Activated B cell treated with CpG ODN at 0.5 μM for 24 hours (primary cell): ENCODE measurements at regions of chr10 and their contacts with region 1.

Region 1: DNA sequence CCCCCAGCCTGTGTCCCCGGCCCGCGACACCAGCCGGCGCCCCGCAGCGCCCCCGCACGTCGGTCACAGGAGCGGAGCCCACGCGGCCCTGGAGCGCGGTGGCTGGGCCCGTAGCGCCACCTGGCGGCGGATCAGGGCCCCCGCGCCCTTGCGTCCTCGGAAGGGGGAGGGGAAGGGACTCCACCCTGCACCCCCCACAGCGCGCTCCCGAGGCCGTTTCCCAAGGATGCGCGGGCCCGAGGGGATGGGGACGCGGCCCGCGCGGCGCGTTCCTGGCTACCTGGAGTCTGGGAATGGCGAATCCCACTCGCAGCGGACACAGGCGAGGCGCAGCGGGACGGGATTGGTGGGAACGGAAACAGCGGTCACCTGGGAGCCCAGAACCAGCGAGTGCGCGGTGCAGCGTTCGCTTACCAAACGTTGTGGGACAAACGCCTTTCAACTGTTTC is 23.8 kb upstream of the MKI67 start:
- DNase-seq: peak; percentile 72
- ATAC-seq: peak; percentile 80
- H3K4me3 Mint-ChIP-seq: peak overlapping the region; percentile 59
- H3K27ac Mint-ChIP-seq: no peak overlapping the region
- H3K4me1 Mint-ChIP-seq: peaks cover 30% of the 10 kb centered on the region
- H3K27me3 Mint-ChIP-seq: peaks cover 11% of the 10 kb centered on the region
- CTCF ChIP-seq: no peak

Region 2: DNA sequence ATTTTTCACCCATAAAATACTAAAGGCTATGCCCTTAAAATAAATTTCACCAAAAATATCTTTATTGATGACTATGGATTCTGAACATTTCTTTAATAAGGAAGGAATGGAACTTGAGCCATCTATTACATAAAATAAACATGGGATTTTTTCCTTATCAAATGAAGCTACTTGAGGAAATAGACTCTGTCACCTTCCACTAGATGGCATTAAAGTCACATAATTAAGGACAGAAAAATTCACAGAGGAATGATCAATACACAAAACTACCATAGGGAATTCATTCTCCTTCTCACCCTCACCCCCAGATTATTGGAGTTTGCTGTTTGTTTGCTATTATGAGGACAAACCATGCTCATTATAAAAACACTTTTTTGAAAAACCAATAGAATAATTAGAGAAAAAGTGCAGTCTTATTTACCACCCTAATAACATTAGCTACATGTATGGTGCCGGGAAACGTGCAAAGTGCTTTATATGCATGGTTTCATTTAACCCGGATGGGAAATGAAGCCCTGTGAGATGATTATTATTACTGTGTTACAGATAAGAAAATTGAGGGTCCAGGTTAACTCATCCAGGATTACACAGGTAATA is 434.2 kb before region 1 on chr10:
- CTCF ChIA-PET with region 1: interaction called, 6 read pairs
- POLR2A ChIA-PET with region 1: no interaction called
- intact Hi-C with region 1: loop called (anchors 1 kb)
- DNase-seq: no peak
- ATAC-seq: no peak
- H3K4me3 Mint-ChIP-seq: no peak overlapping the region
- H3K27ac Mint-ChIP-seq: no peak overlapping the region
- H3K4me1 Mint-ChIP-seq: no peaks in the 10 kb centered on the region
- H3K27me3 Mint-ChIP-seq: no peaks in the 10 kb centered on the region
- CTCF ChIP-seq: no peak

Region 3: GRCh38 chr10:127906548-127907377 is 243.3 kb before region 1 on chr10 and contains the start of gene PTPRE:
- CTCF ChIA-PET with region 1: interaction called, 3 read pairs
- POLR2A ChIA-PET with region 1: no interaction called
- intact Hi-C with region 1: loop called (anchors 1 kb)
- DNase-seq: peak; percentile 71
- ATAC-seq: peak; percentile 98
- H3K4me3 Mint-ChIP-seq: peak within 1 kb of the TSS; percentile 29
- H3K27ac Mint-ChIP-seq: no peak within 1 kb of the TSS
- H3K4me1 Mint-ChIP-seq: no peaks in the 10 kb centered on the region
- H3K27me3 Mint-ChIP-seq: peaks cover 47% of the 10 kb centered on the region
- CTCF ChIP-seq: no peak
- total RNA-seq, gene PTPRE: 28.2 and 36.8 TPM in 2 replicates

Region 4: DNA sequence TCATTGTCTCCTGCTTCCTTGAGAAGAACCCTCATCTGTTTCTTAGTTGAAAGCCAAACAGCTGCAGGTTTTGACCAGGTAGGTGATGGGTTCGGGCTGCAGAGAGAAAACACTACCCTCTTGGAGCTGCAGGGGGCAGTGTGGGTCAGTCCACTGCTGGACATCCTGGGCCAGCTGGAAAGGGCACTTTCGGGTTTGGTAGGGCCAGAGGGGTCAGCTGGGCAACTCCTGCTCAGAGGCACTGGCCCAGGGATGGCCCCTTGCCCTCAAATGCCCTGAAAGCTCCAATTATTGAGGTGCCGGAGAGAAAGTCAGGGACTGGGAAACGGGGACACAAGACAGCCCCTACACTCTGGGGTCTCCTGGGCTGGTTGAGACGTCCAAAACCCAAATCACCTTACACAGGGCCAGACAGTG is 114.5 kb before region 1 on chr10:
- CTCF ChIA-PET with region 1: interaction called, 22 read pairs
- POLR2A ChIA-PET with region 1: no interaction called
- intact Hi-C with region 1: loop called (anchors 2 kb)
- DNase-seq: peak; percentile 50
- ATAC-seq: peak; percentile 81
- H3K4me3 Mint-ChIP-seq: no peak overlapping the region
- H3K27ac Mint-ChIP-seq: no peak overlapping the region
- H3K4me1 Mint-ChIP-seq: no peaks in the 10 kb centered on the region
- H3K27me3 Mint-ChIP-seq: peaks cover 2% of the 10 kb centered on the region
- CTCF ChIP-seq: peak; percentile 18

Region 5: DNA sequence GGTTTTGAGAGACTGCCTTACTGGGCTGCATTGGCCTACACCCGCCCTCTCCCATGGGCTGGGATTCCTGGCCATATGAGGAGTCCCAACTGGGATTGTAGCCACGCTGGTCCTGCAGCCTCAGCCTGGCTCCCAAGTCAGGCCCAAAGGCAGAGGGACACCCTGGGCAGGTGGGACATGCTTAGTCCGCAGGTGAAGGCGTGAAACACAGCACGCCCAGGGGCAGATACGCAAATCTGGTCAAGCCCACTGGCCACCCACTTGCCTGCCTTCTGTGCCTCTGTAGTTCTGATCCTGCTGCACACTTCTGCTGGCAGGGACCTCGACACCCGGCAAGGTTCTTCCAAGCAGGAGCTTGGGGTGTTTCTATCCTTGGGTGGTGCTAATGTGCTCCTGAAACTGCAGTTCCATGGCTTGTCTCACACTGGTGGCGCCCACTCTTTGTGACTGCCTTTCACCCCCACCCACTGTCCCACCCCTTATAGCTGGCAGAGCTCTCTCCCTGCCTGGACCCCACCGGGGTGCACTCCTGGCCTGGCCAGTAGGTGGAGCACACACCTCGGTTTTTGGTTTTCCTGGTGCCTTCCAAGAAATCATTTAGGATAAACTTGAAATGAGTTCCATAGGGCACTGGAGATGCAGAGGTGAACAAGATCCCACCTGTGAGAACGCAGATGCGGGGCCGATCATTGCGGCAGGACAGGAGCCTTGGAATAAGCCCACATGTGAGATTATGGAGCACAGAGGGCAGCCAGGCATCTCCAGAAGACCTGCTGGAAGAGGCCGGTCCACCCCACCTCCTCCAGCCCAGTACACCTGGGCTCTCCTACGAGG is 71.7 kb before region 1 on chr10:
- CTCF ChIA-PET with region 1: interaction called, 46 read pairs
- POLR2A ChIA-PET with region 1: no interaction called
- intact Hi-C with region 1: loop called (anchors 1 kb)
- DNase-seq: peak; percentile 47
- ATAC-seq: peak; percentile 72
- H3K4me3 Mint-ChIP-seq: no peak overlapping the region
- H3K27ac Mint-ChIP-seq: no peak overlapping the region
- H3K4me1 Mint-ChIP-seq: no peaks in the 10 kb centered on the region
- H3K27me3 Mint-ChIP-seq: no peaks in the 10 kb centered on the region
- CTCF ChIP-seq: peak; percentile 53

Region 6: GRCh38 chr10:128125944-128126764 is 23.9 kb before region 1 on chr10 and contains the start of gene MKI67:
- CTCF ChIA-PET with region 1: no interaction called
- POLR2A ChIA-PET with region 1: interaction called, 10 read pairs
- intact Hi-C with region 1: loop called (anchors 1 kb)
- DNase-seq: peak; percentile 68
- ATAC-seq: peak; percentile 94
- H3K4me3 Mint-ChIP-seq: peak within 1 kb of the TSS; percentile 86
- H3K27ac Mint-ChIP-seq: peak within 1 kb of the TSS; percentile 87
- H3K4me1 Mint-ChIP-seq: peaks cover 18% of the 10 kb centered on the region
- H3K27me3 Mint-ChIP-seq: peaks cover 22% of the 10 kb centered on the region
- CTCF ChIP-seq: no peak
- total RNA-seq, gene MKI67: 2.2 and 3.5 TPM in 2 replicates

Region 7: DNA sequence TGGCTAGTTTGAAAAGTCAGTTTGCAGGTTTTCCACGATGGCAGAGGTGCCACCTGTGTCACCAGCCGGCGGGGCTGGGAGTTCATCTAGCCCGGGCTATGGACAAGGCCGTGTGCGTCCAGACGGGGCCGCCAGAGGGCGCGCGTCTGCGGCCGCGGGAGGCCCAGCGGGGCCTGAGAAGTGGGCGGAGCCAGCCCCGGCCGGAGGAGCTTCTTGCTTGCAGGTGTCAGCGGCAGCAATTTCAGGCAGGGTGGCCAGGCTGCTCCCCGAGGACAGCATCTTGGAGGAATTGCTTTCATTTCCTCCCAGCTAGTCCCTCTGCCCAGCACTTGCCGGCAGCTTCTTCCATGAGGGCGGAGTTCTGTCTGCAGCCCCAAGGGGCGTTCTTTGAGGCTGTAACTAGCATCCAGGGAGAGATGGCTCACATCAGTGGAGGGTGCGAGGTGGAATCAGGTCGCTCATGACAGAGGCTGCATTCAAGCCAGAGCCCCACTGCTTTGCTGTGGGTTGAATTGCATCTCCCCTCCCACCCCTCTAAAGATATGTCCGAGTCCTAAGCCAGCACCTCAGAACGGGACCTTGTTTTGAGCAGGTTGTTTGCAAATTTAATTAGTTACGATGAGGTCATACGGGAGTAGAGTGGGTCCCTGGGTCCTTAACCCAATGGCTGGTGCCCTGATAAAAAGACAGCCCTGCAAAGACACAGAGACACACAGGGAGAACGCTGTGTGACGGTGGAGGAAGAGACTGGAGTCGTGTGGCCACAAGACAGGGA is 62.1 kb after region 1 on chr10:
- CTCF ChIA-PET with region 1: no interaction called
- POLR2A ChIA-PET with region 1: no interaction called
- intact Hi-C with region 1: loop called (anchors 2 kb)
- DNase-seq: peak; percentile 82
- ATAC-seq: peak; percentile 90
- H3K4me3 Mint-ChIP-seq: peak overlapping the region; percentile 80
- H3K27ac Mint-ChIP-seq: peak overlapping the region; percentile 56
- H3K4me1 Mint-ChIP-seq: peaks cover 11% of the 10 kb centered on the region
- H3K27me3 Mint-ChIP-seq: peaks cover 9% of the 10 kb centered on the region
- CTCF ChIP-seq: peak; percentile 74